Panc1 (cell line): ENCODE measurements at regions of chr12 and their contacts with region 1.

Region 1: GRCh38 chr12:63849641-63850040 is 5.1 kb downstream of the SRGAP1 start:
- DNase-seq: no peak
- ATAC-seq: no peak
- H3K4me3 ChIP-seq: no peak overlapping the region
- H3K27ac ChIP-seq: peak overlapping the region; percentile 67
- H3K4me1 ChIP-seq: peaks cover 48% of the 10 kb centered on the region
- H3K27me3 ChIP-seq: no peaks in the 10 kb centered on the region
- CTCF ChIP-seq: no peak

Region 2: GRCh38 chr12:63766498-63766897 is 83.1 kb before region 1 on chr12:
- CTCF ChIA-PET with region 1: no interaction called
- POLR2A ChIA-PET with region 1: no interaction called
- in situ Hi-C with region 1: no loop called
- intact Hi-C with region 1: no loop called
- DNase-seq: no peak
- ATAC-seq: no peak
- H3K4me3 ChIP-seq: no peak overlapping the region
- H3K27ac ChIP-seq: no peak overlapping the region
- H3K4me1 ChIP-seq: no peaks in the 10 kb centered on the region
- H3K27me3 ChIP-seq: peaks cover 5% of the 10 kb centered on the region; the same call in 1 of the 2 replicates
- CTCF ChIP-seq: no peak; the same call in 1 of the 2 replicates

Region 3: DNA sequence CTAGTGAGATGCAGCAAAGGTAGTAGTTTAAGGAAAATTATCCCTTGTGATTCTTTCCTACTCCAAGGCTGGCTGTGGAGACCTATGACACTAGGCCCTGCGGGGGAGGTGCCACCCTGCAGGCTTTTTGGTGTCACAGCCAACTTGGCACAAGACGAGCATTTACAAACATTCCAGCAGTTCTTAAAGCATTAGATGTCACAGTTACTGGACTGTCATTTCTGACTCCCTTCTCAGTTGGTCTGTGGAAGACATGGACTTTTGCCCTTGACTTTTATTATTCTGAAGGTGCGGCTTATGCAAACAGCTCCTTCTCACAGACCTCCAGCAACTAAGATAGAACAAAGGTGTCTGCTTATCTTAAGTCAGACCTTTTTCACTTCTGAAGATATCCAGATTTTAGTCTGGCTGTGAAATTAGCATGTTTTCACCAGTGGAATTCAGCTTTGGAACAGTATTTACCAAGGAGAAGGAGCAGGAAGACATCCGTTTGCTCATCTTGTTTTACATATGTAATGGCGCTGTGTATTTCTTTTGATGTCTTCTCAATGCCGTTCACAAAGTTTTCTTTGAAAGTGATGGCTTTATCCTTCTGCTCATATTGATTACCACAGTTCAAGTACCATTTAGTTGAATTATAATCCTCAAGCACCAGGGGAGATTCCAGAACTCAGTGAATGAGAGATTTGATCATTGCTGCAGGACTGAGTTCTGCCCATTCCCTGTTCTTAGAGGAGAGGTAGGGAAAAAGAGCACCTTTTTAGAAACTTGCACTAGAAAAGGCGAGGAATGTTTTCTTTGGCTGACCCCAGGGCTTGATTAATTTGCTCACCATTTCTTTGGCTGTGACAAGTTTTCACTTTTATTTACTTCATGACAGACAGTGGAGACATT is 12.8 kb after region 1 on chr12:
- CTCF ChIA-PET with region 1: no interaction called
- POLR2A ChIA-PET with region 1: no interaction called
- in situ Hi-C with region 1: no loop called
- intact Hi-C with region 1: no loop called
- DNase-seq: peak; percentile 67
- ATAC-seq: peak; percentile 93
- H3K4me3 ChIP-seq: peak overlapping the region; percentile 8 to 43; a peak in 3 of 4 replicates
- H3K27ac ChIP-seq: peak overlapping the region; percentile 93
- H3K4me1 ChIP-seq: peaks cover 76% of the 10 kb centered on the region
- H3K27me3 ChIP-seq: no peaks in the 10 kb centered on the region
- CTCF ChIP-seq: no peak

Region 4: DNA sequence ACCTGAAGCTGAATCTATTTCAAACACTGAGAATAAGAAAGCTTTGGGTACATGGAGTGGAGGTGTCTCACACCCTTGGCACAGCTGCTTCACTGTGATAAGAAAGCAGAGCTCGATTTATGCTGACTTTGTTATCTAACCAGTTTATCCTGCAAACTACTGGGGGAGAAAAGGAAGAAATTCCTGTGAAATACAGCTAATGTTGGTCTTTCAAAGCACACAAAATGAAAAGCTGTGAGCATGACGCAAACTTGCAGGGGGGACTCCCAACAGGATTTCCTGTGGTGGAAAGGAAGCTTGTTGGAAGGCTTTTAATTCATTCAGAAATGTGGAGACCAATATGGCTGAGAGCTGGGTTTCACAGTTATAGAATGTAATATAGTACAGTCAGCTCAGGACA is 48.3 kb after region 1 on chr12:
- CTCF ChIA-PET with region 1: no interaction called
- POLR2A ChIA-PET with region 1: no interaction called
- in situ Hi-C with region 1: loop called (anchors 5 kb)
- intact Hi-C with region 1: no loop called
- DNase-seq: no peak
- ATAC-seq: no peak
- H3K4me3 ChIP-seq: no peak overlapping the region
- H3K27ac ChIP-seq: peak overlapping the region; percentile 81
- H3K4me1 ChIP-seq: peaks cover 60% of the 10 kb centered on the region
- H3K27me3 ChIP-seq: no peaks in the 10 kb centered on the region
- CTCF ChIP-seq: no peak